ENCODE measurements at regions of chr5 and their contacts with region 1.

Region 1: GRCh38 chr5:59506285-59506877 is 387.1 kb downstream of the PDE4D start:
- DNase-seq: peak; percentile 39
- H3K4me3 ChIP-seq: no peak overlapping the region
- H3K27ac ChIP-seq: no peak overlapping the region
- H3K4me1 ChIP-seq: no peaks in the 10 kb centered on the region
- H3K27me3 ChIP-seq: peaks cover 0 to 4% of the 10 kb centered on the region in 2 experiments
- CTCF ChIP-seq: peak; percentile 2 to 6
- POLR2A ChIP-seq: no peak

Region 2: DNA sequence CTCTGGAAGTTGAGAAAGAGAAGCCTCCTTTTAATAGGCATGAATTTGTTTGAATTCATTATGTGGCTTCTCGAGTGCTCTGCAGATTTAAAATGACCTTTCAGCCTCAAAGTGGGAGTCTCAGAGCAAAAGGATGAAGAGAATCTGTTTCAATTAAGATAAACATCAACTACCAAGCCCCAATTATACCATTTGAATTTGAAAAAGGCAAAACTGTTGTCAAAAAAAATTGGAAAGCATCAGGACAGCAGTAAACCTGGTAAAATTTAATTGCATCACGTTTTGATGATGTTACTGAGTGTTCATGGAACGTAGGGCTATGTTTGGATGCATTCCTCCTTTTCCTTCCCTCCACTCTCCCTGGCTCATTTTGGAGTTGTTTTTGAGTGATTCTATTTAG is 250.1 kb before region 1 on chr5:
- CTCF ChIA-PET with region 1: no interaction called
- POLR2A ChIA-PET with region 1: no interaction called
- dilution Hi-C with region 1: no loop called
- intact Hi-C with region 1: no loop called
- DNase-seq: no peak
- H3K4me3 ChIP-seq: no peak overlapping the region
- H3K27ac ChIP-seq: no peak overlapping the region
- H3K4me1 ChIP-seq: peaks cover 5% of the 10 kb centered on the region
- H3K27me3 ChIP-seq: no peaks in the 10 kb centered on the region
- CTCF ChIP-seq: no peak
- POLR2A ChIP-seq: no peak

Region 3: GRCh38 chr5:59487772-59488729 is 18.3 kb before region 1 on chr5:
- CTCF ChIA-PET with region 1: interaction called, 11 read pairs
- POLR2A ChIA-PET with region 1: no interaction called
- dilution Hi-C with region 1: no loop called
- intact Hi-C with region 1: no loop called
- DNase-seq: no peak
- H3K4me3 ChIP-seq: no peak overlapping the region
- H3K27ac ChIP-seq: no peak overlapping the region
- H3K4me1 ChIP-seq: no peaks in the 10 kb centered on the region
- H3K27me3 ChIP-seq: no peaks in the 10 kb centered on the region
- CTCF ChIP-seq: no peak
- POLR2A ChIP-seq: no peak

Region 4: DNA sequence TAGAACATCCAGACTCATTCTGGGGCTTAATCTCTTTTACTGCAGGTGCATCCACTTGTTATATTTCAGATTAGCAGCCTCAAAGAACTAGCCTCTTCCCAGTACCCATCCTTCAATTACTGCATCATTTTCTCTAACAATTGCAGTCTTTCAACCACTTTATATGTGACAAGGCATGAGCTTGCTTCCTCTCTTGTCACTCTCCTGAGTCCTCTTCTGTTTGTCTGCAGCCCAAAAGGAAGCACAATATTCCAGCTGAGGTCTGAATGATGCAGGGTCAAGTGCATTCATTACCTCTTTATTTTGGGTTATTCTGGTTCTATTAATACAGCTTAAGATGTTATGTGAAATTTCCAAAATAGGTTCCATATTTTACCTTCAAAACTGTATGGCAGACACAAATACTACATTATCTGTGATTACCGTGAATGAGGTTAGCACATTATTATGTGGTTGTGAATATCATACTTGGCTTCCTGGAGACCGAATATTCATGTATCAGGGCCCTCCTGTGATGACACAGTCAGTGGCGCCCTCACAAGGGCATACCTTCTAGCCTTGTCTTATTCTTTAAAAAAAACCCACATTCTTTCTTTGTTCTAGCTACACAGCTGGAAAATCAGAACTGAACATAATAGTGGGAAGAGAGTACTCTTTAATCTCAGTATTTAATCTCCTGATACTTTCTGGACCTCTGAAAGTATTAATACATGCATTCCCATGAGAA is 63.4 kb after region 1 on chr5:
- CTCF ChIA-PET with region 1: interaction called, 16 read pairs
- POLR2A ChIA-PET with region 1: no interaction called
- dilution Hi-C with region 1: no loop called
- intact Hi-C with region 1: no loop called
- DNase-seq: no peak
- H3K4me3 ChIP-seq: no peak overlapping the region
- H3K27ac ChIP-seq: no peak overlapping the region
- H3K4me1 ChIP-seq: no peaks in the 10 kb centered on the region
- H3K27me3 ChIP-seq: no peaks in the 10 kb centered on the region
- CTCF ChIP-seq: no peak
- POLR2A ChIP-seq: no peak

Region 5: GRCh38 chr5:59648949-59649921 is 142.9 kb after region 1 on chr5:
- CTCF ChIA-PET with region 1: interaction called, 19 read pairs
- POLR2A ChIA-PET with region 1: no interaction called
- dilution Hi-C with region 1: no loop called
- intact Hi-C with region 1: no loop called
- DNase-seq: peak; percentile 91
- H3K4me3 ChIP-seq: peak overlapping the region in 1 of 3 experiments; percentile 14
- H3K27ac ChIP-seq: peak overlapping the region; percentile 79
- H3K4me1 ChIP-seq: peaks cover 24% of the 10 kb centered on the region
- H3K27me3 ChIP-seq: no peaks in the 10 kb centered on the region
- CTCF ChIP-seq: no peak
- POLR2A ChIP-seq: no peak

Region 6: GRCh38 chr5:59666440-59667068 is 160.2 kb after region 1 on chr5:
- CTCF ChIA-PET with region 1: interaction called, 160 read pairs
- POLR2A ChIA-PET with region 1: no interaction called
- dilution Hi-C with region 1: no loop called
- intact Hi-C with region 1: no loop called
- DNase-seq: no peak
- H3K4me3 ChIP-seq: no peak overlapping the region
- H3K27ac ChIP-seq: no peak overlapping the region
- H3K4me1 ChIP-seq: peaks cover 14% of the 10 kb centered on the region
- H3K27me3 ChIP-seq: no peaks in the 10 kb centered on the region
- CTCF ChIP-seq: no peak
- POLR2A ChIP-seq: no peak

Region 7: DNA sequence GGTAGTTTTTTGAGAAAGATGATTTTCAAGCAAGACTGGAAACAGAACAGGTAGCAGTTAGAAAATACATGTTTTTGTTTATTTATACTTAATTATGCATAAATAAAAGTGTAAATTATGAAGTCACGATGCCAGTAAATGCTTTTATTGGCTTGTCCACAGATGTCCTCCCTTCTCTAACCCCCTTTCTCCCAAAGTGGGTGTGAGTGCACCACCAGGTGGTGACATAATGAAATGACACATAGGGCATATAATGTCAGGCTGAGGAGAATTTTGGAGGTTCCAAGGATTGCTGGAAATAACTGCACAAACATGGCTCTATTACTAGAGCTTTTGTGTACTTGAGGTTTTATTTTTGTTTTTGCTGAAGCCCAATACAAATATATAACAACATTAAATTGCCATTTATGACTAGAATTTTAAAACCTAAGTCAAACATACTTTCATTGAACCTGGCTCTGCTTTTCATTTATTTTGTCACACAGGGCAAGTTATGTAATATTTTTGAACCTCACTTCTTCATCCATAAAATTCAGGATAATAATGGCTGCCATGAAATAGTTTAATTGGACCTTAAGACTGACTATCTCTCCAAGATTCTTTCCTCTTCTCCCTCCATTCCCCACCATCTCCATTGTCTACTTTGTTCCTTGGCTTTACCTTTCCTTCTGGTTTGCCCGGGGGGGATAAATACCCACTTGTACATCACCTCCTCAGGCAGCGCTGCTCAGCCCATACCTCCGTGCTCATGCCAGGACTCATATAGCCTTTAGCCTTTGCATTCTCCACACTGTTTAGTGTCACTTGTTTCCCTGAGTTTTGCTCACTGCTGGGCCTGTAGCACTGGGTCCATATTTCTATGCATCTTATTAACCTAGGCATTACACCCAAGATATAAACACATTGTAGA is 218.4 kb after region 1 on chr5:
- CTCF ChIA-PET with region 1: interaction called, 14 read pairs
- POLR2A ChIA-PET with region 1: no interaction called
- dilution Hi-C with region 1: no loop called
- intact Hi-C with region 1: loop called (anchors 1 kb)
- DNase-seq: peak; percentile 39
- H3K4me3 ChIP-seq: no peak overlapping the region
- H3K27ac ChIP-seq: no peak overlapping the region
- H3K4me1 ChIP-seq: peaks cover 17% of the 10 kb centered on the region
- H3K27me3 ChIP-seq: no peaks in the 10 kb centered on the region
- CTCF ChIP-seq: peak; percentile 36 to 66
- POLR2A ChIP-seq: no peak